ENCODE measurements at regions of chr14 and their contacts with region 1.

Region 1: DNA sequence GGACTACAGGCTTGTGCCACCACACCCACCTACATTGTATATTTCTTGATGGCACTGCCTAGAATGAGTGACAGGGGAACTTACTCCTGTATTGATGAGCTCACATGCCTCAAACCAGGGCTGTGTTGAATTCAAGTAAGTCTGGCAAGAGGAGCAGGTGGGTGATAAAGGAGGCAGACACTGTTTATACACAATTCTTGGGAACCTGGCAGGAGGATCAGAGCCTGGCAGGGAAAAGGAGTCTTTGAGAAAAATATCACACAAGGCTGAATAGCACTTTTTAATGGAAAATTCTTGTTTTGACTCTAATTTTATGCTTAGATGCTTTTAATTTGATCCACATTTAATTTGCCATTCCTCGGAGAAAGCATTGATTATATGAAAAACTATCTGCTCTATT is 293.1 kb upstream of the NPAS3 start:
- DNase-seq: no peak
- CTCF ChIP-seq: no peak

Region 2: GRCh38 chr14:32635061-32635719 is 10.4 kb before region 1 on chr14:
- CTCF ChIA-PET with region 1: interaction called, 23 read pairs
- POLR2A ChIA-PET with region 1: no interaction called
- DNase-seq: no peak
- CTCF ChIP-seq: no peak

Region 3: GRCh38 chr14:32666308-32666707 is 20.8 kb after region 1 on chr14:
- CTCF ChIA-PET with region 1: no interaction called
- POLR2A ChIA-PET with region 1: no interaction called
- DNase-seq: no peak
- CTCF ChIP-seq: no peak

Measured in GM10248 (cell line).